HepG2 (cell line): ENCODE measurements at regions of chr6 and their contacts with region 1.

Region 1: GRCh38 chr6:3825851-3826581 is 23.2 kb upstream of the FAM50B start:
- DNase-seq: peak; percentile 73
- ATAC-seq: peak; percentile 78
- H3K4me3 ChIP-seq: peak overlapping the region; percentile 24 to 43 (median 31); a peak in 5 of 6 replicates
- H3K27ac ChIP-seq: peak overlapping the region; percentile 48
- H3K4me1 ChIP-seq: peaks cover 49% of the 10 kb centered on the region
- H3K27me3 ChIP-seq: no peaks in the 10 kb centered on the region
- CTCF ChIP-seq: no peak
- EP300 ChIP-seq: no peak
- POLR2A ChIP-seq: no peak
- RAD21 ChIP-seq: no peak

Region 2: DNA sequence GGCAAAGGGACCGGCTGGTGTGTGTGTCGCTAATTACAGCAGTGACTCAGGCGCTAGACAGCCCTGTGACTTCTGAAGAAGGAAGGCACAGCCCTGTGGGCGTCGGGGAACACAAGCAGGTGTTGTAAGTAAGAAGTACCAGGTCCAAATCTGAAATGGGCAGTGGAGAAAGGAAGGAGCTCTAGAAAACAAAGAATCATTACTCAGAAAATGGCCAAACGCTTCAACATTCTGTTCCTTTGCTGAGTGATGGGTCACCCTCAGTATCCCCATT is 181.3 kb before region 1 on chr6:
- CTCF ChIA-PET with region 1: no interaction called
- POLR2A ChIA-PET with region 1: no interaction called
- in situ Hi-C with region 1: no loop called
- intact Hi-C with region 1: no loop called
- DNase-seq: no peak
- ATAC-seq: no peak
- H3K4me3 ChIP-seq: no peak overlapping the region
- H3K27ac ChIP-seq: no peak overlapping the region
- H3K4me1 ChIP-seq: no peaks in the 10 kb centered on the region
- H3K27me3 ChIP-seq: peaks cover 0 to 20% of the 10 kb centered on the region in 2 experiments; a peak in 3 of 5 replicates
- CTCF ChIP-seq: no peak
- EP300 ChIP-seq: no peak
- POLR2A ChIP-seq: no peak
- RAD21 ChIP-seq: no peak

Region 3: DNA sequence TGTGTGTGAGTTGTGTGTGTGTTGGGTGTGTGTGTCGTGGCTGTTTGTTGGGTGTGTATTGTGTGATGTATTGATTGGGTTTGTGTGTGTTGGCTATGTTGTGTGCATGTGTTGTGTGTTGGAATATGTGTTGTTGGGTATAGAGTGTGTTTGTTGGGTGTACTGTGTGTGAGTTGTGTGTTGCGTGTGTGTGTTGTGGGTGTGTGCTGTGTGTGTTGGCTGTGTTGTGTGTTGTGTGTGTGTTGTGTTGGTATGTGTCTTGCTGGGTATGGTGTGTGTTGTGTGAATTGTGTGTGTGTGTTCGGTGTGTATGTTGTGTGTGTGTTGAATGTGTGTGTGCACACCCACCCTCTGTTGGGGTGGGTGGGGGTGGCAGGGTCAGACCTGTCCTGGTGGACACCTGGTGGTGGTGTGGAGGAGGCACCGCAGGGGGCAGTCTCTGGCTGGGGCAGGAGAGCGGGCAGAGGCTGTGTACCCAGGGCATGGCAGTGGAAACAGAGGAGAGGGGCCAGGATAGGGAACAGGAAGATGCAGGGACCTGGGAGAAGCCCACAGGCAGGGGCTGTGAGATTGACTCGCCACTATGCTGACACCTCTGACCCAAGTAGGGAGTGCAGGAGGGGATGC is 49.0 kb before region 1 on chr6:
- CTCF ChIA-PET with region 1: interaction called, 11 read pairs
- POLR2A ChIA-PET with region 1: no interaction called
- in situ Hi-C with region 1: no loop called
- intact Hi-C with region 1: no loop called
- DNase-seq: peak; percentile 57
- ATAC-seq: peak; percentile 91
- H3K4me3 ChIP-seq: no peak overlapping the region
- H3K27ac ChIP-seq: no peak overlapping the region
- H3K4me1 ChIP-seq: peaks cover 22% of the 10 kb centered on the region
- H3K27me3 ChIP-seq: no peaks in the 10 kb centered on the region; a peak in 1 of 5 replicates
- CTCF ChIP-seq: peak; percentile 77
- EP300 ChIP-seq: no peak
- POLR2A ChIP-seq: no peak
- RAD21 ChIP-seq: peak; percentile 74

Region 4: DNA sequence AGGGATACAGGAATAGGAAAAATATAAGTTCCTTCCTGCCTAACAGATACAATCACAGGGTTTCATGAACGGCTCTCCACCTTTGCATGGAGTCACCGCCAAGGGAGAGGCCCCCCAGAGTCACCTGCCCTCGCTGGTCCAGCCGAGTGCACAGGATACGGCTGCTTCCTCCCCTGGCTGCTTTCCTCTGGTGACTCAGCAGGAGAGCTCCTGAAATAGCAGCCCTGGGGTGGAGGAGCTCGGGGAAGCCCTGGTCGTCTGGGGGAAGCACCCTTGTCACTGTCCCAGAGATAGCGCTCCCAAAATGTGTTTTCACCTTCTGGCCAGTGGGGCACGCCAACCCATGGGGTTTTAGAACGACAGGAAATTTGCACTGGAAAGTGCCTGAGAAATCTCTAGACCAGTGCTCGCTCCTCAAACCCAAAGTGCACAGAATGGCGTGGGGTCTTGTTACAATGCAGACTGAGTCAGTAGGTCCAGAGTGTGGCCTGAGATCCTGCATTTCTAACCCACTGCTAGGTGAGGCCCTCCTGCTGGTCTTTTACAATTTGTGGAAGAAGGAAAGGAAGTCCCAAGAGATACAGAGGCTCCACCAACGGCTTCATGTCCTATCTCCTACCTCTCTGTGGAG is 12.8 kb before region 1 on chr6:
- CTCF ChIA-PET with region 1: no interaction called
- POLR2A ChIA-PET with region 1: interaction called, 5 read pairs
- in situ Hi-C with region 1: no loop called
- intact Hi-C with region 1: loop called (anchors 1 kb)
- DNase-seq: peak; percentile 33
- ATAC-seq: peak; percentile 78
- H3K4me3 ChIP-seq: peak overlapping the region in 1 of 3 experiments; percentile 25; a peak in 1 of 6 replicates
- H3K27ac ChIP-seq: peak overlapping the region; percentile 15
- H3K4me1 ChIP-seq: peaks cover 30% of the 10 kb centered on the region
- H3K27me3 ChIP-seq: no peaks in the 10 kb centered on the region
- CTCF ChIP-seq: no peak; the same call in 1 of the 2 replicates
- EP300 ChIP-seq: no peak
- POLR2A ChIP-seq: no peak
- RAD21 ChIP-seq: no peak

Region 5: GRCh38 chr6:3990692-3991501 is 164.9 kb after region 1 on chr6:
- CTCF ChIA-PET with region 1: no interaction called
- POLR2A ChIA-PET with region 1: no interaction called
- in situ Hi-C with region 1: no loop called
- intact Hi-C with region 1: loop called (anchors 2 kb)
- DNase-seq: peak; percentile 77
- ATAC-seq: peak; percentile 98
- H3K4me3 ChIP-seq: peak overlapping the region in 1 of 3 experiments; percentile 52; a peak in 2 of 6 replicates
- H3K27ac ChIP-seq: no peak overlapping the region
- H3K4me1 ChIP-seq: peaks cover 20% of the 10 kb centered on the region
- H3K27me3 ChIP-seq: no peaks in the 10 kb centered on the region
- CTCF ChIP-seq: peak; percentile 99
- EP300 ChIP-seq: no peak
- POLR2A ChIP-seq: no peak
- RAD21 ChIP-seq: peak; percentile 96